ENCODE measurements at regions of chr10 and their contacts with region 1.

Region 1: DNA sequence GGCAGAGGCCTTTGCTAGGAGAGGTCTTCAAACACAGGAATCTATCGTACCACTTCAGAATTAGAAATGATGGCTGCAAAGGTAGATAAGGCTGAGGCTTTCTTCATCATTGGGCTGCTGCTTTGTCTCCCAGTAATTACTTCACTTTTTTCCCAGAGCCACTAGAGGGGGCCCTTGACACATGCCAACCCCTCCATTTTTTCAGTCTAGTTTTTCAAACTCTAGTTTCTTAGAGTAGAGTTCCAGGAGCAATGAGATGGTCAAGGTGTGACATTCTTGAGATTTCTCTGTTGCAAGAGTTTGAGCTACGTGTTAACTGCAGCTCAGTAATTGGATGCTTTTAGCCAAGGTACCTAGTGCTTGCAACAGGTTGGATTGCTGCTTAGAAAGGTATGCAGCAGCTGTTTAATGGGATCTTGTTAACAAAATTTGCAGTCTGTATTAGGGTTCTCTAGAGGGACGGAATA is 33.8 kb upstream of the RBM20 start:
- DNase-seq: peak; percentile 62
- ATAC-seq: peak; percentile 50
- H3K4me3 Mint-ChIP-seq: no peak overlapping the region
- H3K27ac Mint-ChIP-seq: no peak overlapping the region
- H3K4me1 Mint-ChIP-seq: peaks cover 46% of the 10 kb centered on the region
- H3K27me3 Mint-ChIP-seq: no peaks in the 10 kb centered on the region
- CTCF ChIP-seq: peak; percentile 89

Region 2: DNA sequence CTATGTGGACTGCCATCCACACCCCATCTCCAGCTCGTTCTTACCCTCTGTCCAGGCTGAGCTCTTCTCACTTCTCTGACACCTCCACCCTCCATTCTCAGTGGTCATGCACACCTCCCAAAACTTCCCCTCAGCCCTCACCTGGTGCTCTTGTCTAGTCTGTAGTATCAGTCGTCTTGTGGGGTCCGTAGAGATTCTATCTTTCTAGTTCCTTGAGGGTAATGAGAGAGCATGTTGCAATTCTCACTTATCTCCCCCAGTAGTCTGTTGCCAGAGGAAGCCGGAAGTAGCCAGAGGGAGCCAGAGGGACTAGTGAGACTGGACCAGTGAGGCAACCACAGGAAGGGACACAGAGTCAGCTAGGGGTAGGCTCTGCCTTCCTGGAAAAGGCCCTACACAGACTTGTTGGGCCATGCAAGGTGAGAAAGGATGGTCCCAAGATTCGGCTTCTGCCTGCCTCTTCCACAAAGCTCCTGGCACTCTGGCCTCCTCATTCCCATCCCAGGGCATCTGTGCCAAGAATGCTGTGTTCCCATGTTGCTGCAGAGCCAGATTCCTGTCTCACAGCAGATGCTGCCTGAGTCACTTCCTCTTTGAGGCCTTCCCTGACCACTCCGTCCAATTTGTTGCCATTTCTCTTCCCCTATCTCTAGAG is 163.3 kb before region 1 on chr10:
- CTCF ChIA-PET with region 1: no interaction called
- POLR2A ChIA-PET with region 1: no interaction called
- intact Hi-C with region 1: no loop called
- DNase-seq: no peak
- ATAC-seq: no peak
- H3K4me3 Mint-ChIP-seq: no peak overlapping the region
- H3K27ac Mint-ChIP-seq: no peak overlapping the region
- H3K4me1 Mint-ChIP-seq: peaks cover 2% of the 10 kb centered on the region
- H3K27me3 Mint-ChIP-seq: peaks cover 1% of the 10 kb centered on the region
- CTCF ChIP-seq: no peak

Region 3: DNA sequence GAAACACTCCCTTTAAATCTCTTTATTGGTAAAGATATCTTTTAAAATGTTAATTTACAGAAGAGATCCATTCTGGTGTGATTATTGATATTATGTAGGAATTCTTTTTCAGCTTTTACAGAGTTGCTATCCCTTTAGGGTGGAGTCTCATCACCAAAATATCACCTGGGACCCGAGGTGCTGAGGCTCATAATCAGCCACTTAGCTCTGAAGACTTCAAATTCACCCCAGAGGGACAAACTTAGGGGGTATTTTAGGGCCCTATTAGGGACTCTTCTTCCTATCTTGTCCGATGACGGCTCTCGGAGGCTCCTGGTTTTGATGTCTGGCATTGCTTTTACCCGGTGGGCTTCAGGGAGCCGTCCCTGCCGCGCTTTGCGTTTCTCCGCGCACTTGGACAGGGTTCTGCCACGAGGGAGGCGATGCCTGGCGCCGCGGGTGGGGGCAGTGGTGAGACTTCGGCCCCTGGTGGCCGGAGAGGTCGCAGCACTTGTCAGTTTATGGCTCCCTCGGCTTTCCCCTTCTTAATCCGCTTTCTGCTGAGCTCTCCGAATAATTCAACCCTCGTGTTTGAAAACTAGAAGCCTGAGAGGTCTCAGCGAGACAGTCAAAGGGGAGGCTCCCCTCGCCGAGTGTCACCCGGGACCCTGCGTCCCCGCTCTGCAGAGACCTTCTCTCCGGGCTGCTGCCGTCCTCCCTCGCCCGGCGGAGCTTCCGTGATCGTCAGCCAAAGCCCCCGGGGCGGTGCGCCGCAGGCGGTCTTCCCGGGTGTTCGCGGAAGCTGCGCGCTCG is 61.6 kb after region 1 on chr10:
- CTCF ChIA-PET with region 1: interaction called, 81 read pairs
- POLR2A ChIA-PET with region 1: interaction called, 6 read pairs
- intact Hi-C with region 1: loop called (anchors 2 kb)
- DNase-seq: peak; percentile 82
- ATAC-seq: peak; percentile 97
- H3K4me3 Mint-ChIP-seq: peak overlapping the region; percentile 80
- H3K27ac Mint-ChIP-seq: peak overlapping the region; percentile 82
- H3K4me1 Mint-ChIP-seq: peaks cover 4% of the 10 kb centered on the region
- H3K27me3 Mint-ChIP-seq: peaks cover 3% of the 10 kb centered on the region
- CTCF ChIP-seq: peak; percentile 83

Region 4: DNA sequence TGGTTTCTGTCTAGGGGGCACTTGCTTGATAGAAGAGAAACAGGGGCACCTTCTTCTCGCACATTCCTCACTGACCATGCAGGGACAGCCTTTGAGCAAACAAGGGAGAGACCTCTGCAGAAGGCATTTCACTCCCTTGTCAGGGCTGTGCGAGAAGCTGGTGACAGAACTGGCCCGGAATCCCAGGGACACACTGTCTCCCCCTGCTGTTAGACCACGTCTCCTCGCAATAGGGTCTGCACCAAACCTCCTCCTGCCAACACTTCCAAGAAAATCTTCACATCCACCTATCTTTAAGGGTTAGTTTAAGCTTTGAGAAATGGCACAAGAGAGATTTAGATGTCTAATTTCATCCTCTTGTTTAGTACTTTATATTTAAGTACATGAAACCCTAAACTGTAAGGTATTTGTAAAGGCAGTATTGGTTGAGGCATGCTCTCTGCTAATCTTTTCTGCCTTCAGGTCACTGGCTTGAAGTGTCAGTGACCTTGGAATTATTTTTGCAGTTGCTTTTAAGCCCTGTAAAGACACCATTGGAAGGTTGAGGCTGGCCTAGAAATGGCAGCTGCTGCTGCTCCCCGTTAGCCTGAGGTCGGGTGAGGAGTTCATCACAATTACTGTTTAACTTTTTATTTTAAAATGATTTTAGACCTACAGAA is 70.8 kb after region 1 on chr10:
- CTCF ChIA-PET with region 1: interaction called, 45 read pairs
- POLR2A ChIA-PET with region 1: interaction called, 4 read pairs
- intact Hi-C with region 1: no loop called
- DNase-seq: peak; percentile 62
- ATAC-seq: peak; percentile 83
- H3K4me3 Mint-ChIP-seq: no peak overlapping the region
- H3K27ac Mint-ChIP-seq: no peak overlapping the region
- H3K4me1 Mint-ChIP-seq: no peaks in the 10 kb centered on the region
- H3K27me3 Mint-ChIP-seq: peaks cover 10% of the 10 kb centered on the region
- CTCF ChIP-seq: peak; percentile 38

Region 5: GRCh38 chr10:110706690-110707098 is 96.4 kb after region 1 on chr10:
- CTCF ChIA-PET with region 1: interaction called, 10 read pairs
- POLR2A ChIA-PET with region 1: no interaction called
- intact Hi-C with region 1: no loop called
- DNase-seq: no peak
- ATAC-seq: no peak
- H3K4me3 Mint-ChIP-seq: no peak overlapping the region
- H3K27ac Mint-ChIP-seq: no peak overlapping the region
- H3K4me1 Mint-ChIP-seq: no peaks in the 10 kb centered on the region
- H3K27me3 Mint-ChIP-seq: no peaks in the 10 kb centered on the region
- CTCF ChIP-seq: no peak

Region 6: DNA sequence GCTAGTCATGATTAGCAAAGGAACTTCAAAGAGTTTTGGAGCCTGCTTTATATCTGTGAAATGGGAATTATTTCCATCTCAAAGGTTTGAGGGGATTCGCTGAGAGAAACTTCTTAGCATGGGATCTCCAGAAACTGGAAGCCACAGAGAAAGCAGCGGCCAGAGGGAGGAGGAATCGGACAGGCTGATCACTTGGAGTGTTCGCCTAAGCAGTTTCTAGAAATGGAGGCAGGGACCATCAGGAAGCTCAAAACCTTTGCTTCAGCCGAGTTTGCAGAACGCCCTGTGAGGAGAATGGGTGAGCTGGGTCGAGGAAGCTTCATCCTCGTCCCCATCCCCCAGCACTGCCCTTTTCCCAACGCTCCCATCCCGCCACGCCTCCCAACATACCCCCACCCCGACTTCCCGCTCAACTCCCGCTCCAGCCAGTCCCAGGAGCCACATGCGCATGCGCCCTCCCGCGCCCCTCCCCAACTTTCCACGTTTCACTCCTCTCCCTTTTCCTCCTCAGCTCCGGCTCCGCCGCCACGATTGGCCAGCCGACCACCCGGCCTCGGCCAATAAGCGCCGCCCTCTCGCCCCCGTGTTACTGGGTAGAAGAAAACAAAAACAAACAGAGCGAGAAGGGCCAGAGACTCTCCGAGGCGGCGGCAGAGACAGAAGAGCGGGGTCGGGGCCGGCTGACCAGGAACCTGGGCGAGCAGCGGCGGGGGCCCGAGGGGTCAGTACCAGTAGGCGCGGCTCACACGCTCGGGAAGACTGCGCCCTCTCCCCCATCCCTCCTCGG is 261.1 kb after region 1 on chr10 and contains the start of gene PDCD4:
- CTCF ChIA-PET with region 1: no interaction called
- POLR2A ChIA-PET with region 1: no interaction called
- intact Hi-C with region 1: loop called (anchors 10 kb)
- DNase-seq: peak; percentile 97
- ATAC-seq: peak; percentile 75
- H3K4me3 Mint-ChIP-seq: peak within 1 kb of the TSS; percentile 86
- H3K27ac Mint-ChIP-seq: peak within 1 kb of the TSS; percentile 95
- H3K4me1 Mint-ChIP-seq: peaks cover 59% of the 10 kb centered on the region
- H3K27me3 Mint-ChIP-seq: no peaks in the 10 kb centered on the region
- CTCF ChIP-seq: no peak
- total RNA-seq, gene PDCD4: 186 to 190 TPM

Region 7: GRCh38 chr10:110901954-110902819 is 291.8 kb after region 1 on chr10:
- CTCF ChIA-PET with region 1: no interaction called
- POLR2A ChIA-PET with region 1: no interaction called
- intact Hi-C with region 1: loop called (anchors 10 kb)
- DNase-seq: peak; percentile 79
- ATAC-seq: peak; percentile 63
- H3K4me3 Mint-ChIP-seq: peak overlapping the region; percentile 20
- H3K27ac Mint-ChIP-seq: peak overlapping the region; percentile 90
- H3K4me1 Mint-ChIP-seq: peaks cover 51% of the 10 kb centered on the region
- H3K27me3 Mint-ChIP-seq: no peaks in the 10 kb centered on the region
- CTCF ChIP-seq: no peak

Region 8: GRCh38 chr10:110993024-110993693 is 382.8 kb after region 1 on chr10:
- CTCF ChIA-PET with region 1: no interaction called
- POLR2A ChIA-PET with region 1: no interaction called
- intact Hi-C with region 1: loop called (anchors 10 kb)
- DNase-seq: peak; percentile 43
- ATAC-seq: peak; percentile 98
- H3K4me3 Mint-ChIP-seq: peak overlapping the region; percentile 48
- H3K27ac Mint-ChIP-seq: peak overlapping the region; percentile 46
- H3K4me1 Mint-ChIP-seq: peaks cover 44% of the 10 kb centered on the region
- H3K27me3 Mint-ChIP-seq: no peaks in the 10 kb centered on the region
- CTCF ChIP-seq: no peak